ENCODE measurements at regions of chr17 and their contacts with region 1.

Region 1: DNA sequence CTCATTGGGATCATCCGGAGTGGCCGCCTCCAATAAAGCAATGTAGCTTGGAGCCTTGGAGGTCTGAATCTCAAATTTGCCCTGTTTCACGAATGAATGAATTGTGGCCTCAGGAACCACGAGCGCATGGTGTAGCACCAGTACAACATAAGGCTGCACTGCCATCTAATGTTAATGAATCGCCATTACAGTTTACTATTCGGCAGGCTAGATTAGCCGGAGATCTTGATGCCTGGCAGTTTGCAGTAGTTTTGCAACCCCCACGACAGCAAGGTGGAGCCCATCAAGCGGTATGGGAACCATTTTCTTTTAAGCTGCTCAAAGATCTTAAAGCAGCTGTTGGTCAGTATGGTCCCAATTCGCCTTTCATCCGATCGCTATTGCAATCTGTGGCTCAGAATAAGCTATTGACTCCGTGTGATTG is 18.8 kb downstream of the ALOX15B start:
- DNase-seq: no peak
- H3K4me3 ChIP-seq: no peak overlapping the region
- CTCF ChIP-seq: peak; percentile 68

Region 2: DNA sequence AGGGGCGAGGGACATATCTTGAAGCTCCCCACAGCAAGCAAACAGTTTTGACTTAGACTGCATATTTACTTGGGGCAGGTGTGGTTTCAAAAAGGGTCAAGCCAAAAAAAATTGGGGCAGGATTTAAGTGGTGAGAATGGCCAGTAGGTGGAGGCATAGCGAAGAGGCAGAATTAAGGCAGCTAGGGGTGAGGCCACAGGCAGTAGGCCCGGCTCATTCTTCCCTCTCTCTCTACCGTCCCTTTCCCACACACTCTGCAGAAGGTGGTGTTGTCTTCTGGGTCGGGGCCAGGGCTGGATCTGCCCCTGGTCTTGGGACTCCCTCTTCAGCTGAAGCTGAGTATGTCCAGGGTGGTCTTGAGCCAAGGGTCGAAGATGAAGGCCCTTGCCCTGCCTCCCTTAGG is 425.2 kb before region 1 on chr17:
- CTCF ChIA-PET with region 1: interaction called, 10 read pairs
- POLR2A ChIA-PET with region 1: no interaction called
- DNase-seq: no peak
- H3K4me3 ChIP-seq: no peak overlapping the region
- CTCF ChIP-seq: peak; percentile 58

Region 3: GRCh38 chr17:7897773-7898172 is 159.9 kb before region 1 on chr17:
- CTCF ChIA-PET with region 1: interaction called, 10 read pairs
- POLR2A ChIA-PET with region 1: no interaction called
- DNase-seq: no peak
- H3K4me3 ChIP-seq: no peak overlapping the region
- CTCF ChIP-seq: peak; percentile 44

Region 4: GRCh38 chr17:7997186-7997585 is 60.5 kb before region 1 on chr17:
- CTCF ChIA-PET with region 1: interaction called, 13 read pairs
- POLR2A ChIA-PET with region 1: no interaction called
- DNase-seq: no peak
- H3K4me3 ChIP-seq: no peak overlapping the region
- CTCF ChIP-seq: peak; percentile 29

Region 5: DNA sequence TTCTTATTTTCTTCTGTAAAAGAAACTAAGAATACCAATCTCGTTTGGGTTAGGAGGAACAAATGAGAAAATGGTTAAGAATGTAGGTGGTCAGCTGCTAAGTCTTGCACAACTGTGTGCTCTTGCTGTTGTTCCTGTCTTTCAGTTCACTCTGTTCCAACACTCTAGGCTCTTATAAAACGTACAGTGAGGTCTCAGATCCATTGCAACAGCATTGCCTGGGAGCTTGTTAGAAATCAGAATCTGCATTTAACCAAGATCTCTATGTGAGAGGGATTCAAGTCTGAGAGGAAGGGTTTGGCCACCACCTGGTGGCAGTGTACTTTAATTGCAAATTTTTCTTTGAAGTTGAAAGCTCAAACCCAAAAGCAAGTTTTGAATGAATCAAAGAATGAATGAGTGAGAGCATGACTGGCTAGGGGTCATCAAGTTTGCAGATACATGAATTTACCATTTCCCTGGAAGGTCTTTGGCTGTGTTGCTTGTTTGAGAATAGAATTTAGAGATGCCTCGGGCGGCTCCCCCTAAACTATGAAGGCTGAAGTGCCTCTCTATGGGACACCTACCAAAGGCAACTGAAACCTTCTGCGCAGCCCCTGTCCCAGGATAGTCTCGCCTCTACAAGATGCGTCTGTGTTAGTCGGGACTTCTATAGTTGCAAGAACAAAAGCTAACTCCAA is 16.3 kb before region 1 on chr17:
- CTCF ChIA-PET with region 1: interaction called, 155 read pairs
- POLR2A ChIA-PET with region 1: no interaction called
- DNase-seq: no peak
- H3K4me3 ChIP-seq: no peak overlapping the region
- CTCF ChIP-seq: peak; percentile 33

Region 6: DNA sequence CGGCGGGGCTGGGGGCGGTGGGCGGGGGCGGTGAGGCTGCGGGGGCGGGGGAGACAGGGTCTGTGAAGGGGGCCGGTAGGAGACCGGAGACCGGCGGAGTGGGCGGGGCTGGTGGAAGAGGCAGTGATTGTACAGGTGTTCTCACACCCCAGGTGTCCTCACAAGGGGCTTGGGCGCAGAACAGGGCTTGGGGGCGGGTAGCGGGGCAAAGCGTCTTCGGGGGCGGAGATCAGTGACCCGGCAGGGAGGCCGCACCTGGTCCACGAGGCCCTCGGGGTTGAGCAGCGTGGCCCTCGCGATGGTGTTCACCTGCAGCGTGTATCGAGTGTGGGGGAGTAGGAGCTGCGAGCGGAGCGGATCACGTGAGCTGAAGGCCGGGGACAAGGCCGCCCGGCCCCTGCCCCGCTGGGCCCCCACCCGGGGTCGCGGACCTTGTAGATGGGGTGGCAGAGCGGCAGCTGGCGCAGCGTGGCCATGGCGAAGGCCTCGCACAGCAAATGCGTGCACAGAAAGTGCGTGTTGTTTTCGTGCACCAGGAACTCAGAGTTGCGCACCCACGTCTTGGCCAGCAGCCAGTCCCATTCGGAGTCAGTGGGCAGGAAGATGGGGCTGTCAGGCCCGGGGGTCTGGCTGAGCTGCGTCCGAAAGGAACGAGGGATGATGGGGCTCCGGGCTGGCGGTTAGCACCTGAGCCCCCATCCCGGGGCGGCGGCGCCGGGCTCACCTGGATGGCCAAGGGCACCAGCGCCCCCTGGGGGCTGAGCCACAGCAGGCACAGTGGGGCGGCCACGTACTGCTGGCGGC is 52.2 kb after region 1 on chr17:
- CTCF ChIA-PET with region 1: interaction called, 130 read pairs
- POLR2A ChIA-PET with region 1: no interaction called
- DNase-seq: no peak
- H3K4me3 ChIP-seq: peak overlapping the region; percentile 8; the same call in 1 of the 2 replicates
- CTCF ChIP-seq: peak; percentile 79

Region 7: GRCh38 chr17:8248751-8249607 is 191.3 kb after region 1 on chr17 and contains the start of gene PFAS:
- CTCF ChIA-PET with region 1: no interaction called
- POLR2A ChIA-PET with region 1: no interaction called
- DNase-seq: peak; percentile 45
- H3K4me3 ChIP-seq: peak within 1 kb of the TSS; percentile 99
- CTCF ChIP-seq: no peak

Region 8: GRCh38 chr17:8300627-8301242 is 243.0 kb after region 1 on chr17:
- CTCF ChIA-PET with region 1: interaction called, 37 read pairs
- POLR2A ChIA-PET with region 1: no interaction called
- DNase-seq: no peak
- H3K4me3 ChIP-seq: no peak overlapping the region
- CTCF ChIP-seq: peak; percentile 89